Panc1 (cell line): ENCODE measurements at regions of chr5 and their contacts with region 1.

Region 1: DNA sequence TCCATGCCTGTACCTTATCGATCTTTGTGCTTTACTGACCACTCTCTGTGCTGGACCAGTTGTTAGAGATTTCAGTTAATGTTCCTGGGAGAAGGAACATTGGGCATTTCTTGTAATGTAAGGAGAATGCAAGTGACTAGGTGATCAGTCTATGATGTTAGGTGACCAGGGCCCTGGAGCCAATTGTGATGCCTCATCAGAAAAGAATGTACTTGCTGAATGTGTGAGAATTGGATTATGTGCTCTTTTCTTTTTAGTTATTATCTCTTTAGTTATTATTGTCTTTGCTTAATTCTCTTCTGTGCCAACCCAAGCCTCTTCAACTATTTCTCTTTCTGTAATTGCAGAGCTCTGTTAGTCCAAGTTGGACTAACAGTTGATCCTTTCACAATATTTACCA is 92.9 kb downstream of the LRRC70 start:
- DNase-seq: no peak
- ATAC-seq: no peak
- H3K4me3 ChIP-seq: no peak overlapping the region
- H3K27ac ChIP-seq: no peak overlapping the region
- H3K4me1 ChIP-seq: no peaks in the 10 kb centered on the region
- H3K27me3 ChIP-seq: no peaks in the 10 kb centered on the region
- CTCF ChIP-seq: no peak

Region 2: DNA sequence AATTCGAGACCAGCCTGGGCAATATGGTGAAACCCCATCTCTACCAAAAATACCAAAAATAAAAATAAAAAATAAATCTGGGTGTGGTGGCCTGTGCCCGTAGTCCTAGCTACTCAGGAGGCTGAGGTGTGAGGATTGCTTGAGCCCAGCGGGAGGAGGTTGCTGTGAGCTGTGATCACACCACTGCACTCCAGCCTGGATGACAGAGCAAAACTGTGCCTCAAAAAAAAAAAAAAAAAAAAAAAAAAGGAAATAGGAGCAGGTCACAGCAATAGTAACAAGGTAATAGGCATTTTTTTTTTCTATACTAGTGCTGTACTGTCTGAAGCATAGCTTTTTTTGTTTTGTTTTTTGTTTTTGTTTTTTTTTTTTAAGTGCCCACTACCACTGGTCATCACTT is 87.1 kb before region 1 on chr5:
- CTCF ChIA-PET with region 1: no interaction called
- POLR2A ChIA-PET with region 1: interaction called, 10 read pairs
- in situ Hi-C with region 1: no loop called
- intact Hi-C with region 1: no loop called
- DNase-seq: no peak
- ATAC-seq: no peak
- H3K4me3 ChIP-seq: no peak overlapping the region
- H3K27ac ChIP-seq: no peak overlapping the region
- H3K4me1 ChIP-seq: no peaks in the 10 kb centered on the region
- H3K27me3 ChIP-seq: no peaks in the 10 kb centered on the region
- CTCF ChIP-seq: no peak

Region 3: DNA sequence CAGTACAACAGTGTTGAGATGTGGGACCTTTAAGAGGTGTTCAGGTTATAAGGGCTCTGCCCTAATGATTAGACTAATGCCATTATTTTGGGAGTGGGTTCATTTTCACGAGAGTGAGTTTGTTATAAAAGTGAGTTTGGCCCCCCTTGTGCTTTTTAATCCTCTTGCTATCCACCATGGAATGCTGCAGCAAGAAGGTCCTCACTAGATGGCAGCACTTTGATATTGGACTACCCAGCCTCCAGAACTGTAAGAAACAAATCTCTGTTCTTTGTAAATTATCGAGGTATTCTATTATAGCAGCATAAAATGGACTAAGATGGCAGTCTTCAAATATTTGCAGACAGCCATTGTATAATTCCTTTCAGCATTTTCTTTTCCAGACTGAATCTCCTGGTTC is 119.6 kb after region 1 on chr5:
- CTCF ChIA-PET with region 1: no interaction called
- POLR2A ChIA-PET with region 1: no interaction called
- in situ Hi-C with region 1: no loop called
- intact Hi-C with region 1: no loop called
- DNase-seq: no peak
- ATAC-seq: no peak
- H3K4me3 ChIP-seq: no peak overlapping the region
- H3K27ac ChIP-seq: no peak overlapping the region
- H3K4me1 ChIP-seq: no peaks in the 10 kb centered on the region
- H3K27me3 ChIP-seq: peaks cover 5% of the 10 kb centered on the region
- CTCF ChIP-seq: peak; percentile 67

Region 4: GRCh38 chr5:62828742-62829603 is 157.5 kb after region 1 on chr5:
- CTCF ChIA-PET with region 1: no interaction called
- POLR2A ChIA-PET with region 1: no interaction called
- in situ Hi-C with region 1: no loop called
- intact Hi-C with region 1: no loop called
- DNase-seq: no peak
- ATAC-seq: no peak
- H3K4me3 ChIP-seq: no peak overlapping the region
- H3K27ac ChIP-seq: no peak overlapping the region
- H3K4me1 ChIP-seq: no peaks in the 10 kb centered on the region
- H3K27me3 ChIP-seq: no peaks in the 10 kb centered on the region
- CTCF ChIP-seq: no peak

Region 5: GRCh38 chr5:62922191-62922590 is 250.7 kb after region 1 on chr5:
- CTCF ChIA-PET with region 1: no interaction called
- POLR2A ChIA-PET with region 1: no interaction called
- in situ Hi-C with region 1: no loop called
- intact Hi-C with region 1: no loop called
- DNase-seq: no peak
- ATAC-seq: no peak
- H3K4me3 ChIP-seq: no peak overlapping the region
- H3K27ac ChIP-seq: no peak overlapping the region
- H3K4me1 ChIP-seq: no peaks in the 10 kb centered on the region
- H3K27me3 ChIP-seq: no peaks in the 10 kb centered on the region
- CTCF ChIP-seq: no peak